PC-3 (cell line): ENCODE measurements at regions of chr18 and their contacts with region 1.

Region 1: DNA sequence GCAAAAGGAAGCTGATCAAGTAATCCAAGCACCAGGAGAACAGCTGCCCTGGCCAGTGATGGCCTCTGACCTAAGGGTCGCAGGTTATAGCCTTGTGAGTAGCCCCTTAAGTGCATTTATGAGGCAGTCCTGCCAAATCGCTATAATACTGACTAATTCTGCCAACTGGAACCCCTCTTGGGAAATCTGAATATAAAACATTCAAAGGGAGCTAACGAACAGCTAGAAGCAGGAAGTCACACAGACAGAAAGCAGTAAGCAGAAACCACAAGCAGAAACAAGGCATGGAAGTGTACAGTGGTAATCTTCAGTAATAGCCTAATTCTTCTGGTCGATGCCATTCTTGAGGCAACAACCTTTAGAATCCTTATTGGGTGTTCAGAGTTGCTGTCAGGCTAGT is 521.3 kb downstream of the METTL4 start:
- DNase-seq: no peak
- ATAC-seq: no peak
- H3K4me3 ChIP-seq: no peak overlapping the region
- H3K27ac ChIP-seq: no peak overlapping the region
- H3K4me1 ChIP-seq: peaks cover 10% of the 10 kb centered on the region; the same call in 1 of the 2 replicates
- H3K27me3 ChIP-seq: peaks cover 8% of the 10 kb centered on the region
- CTCF ChIP-seq: no peak

Region 2: DNA sequence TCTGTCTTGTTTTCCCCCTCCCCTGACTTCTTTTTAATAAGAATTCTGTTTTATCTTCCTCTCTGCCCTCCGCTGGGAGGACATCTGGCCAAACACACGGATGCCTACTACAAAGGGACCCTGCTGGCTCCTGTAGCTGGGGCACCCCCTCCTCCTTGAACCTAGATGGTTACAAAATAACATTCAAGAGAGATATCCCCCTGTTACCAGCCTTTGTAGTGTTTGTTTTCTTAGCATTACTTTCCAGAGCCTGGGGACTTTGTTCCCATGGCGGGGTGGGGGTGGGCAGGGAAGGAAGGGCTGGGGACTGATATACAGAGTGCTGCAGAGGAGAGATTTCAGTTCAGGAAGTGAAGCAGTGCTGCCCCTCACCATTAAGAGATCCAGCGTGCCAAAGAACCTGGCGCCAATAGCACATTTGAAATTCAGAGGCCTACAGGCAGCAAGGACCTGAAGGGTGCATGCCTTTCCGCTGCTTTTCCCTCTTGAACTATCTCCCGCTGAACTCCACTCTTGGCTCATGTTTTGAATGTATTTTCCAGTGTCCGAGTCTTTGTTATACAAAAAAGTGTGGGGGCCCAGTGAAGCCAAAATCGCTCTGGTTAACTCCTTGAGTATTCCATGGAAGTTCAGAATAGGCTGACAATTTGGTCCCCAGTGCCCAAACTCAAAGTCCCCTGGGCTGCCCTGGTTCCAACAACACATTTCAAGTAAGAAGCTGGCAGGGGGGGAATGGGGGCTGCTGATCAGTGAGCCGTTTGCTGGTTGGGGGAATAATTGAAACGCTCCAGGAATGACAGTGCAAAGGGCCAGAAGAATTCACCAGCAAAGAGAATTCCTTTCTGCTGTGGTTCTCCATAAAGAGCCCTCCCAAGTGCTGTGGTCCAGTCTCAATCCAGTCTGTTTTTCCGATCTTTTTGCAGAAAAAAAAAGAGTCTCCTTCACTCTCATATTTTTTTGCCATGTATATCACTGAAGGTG is 1687.4 kb before region 1 on chr18:
- CTCF ChIA-PET with region 1: no interaction called
- POLR2A ChIA-PET with region 1: interaction called, 13 read pairs
- intact Hi-C with region 1: no loop called
- DNase-seq: no peak
- ATAC-seq: no peak
- H3K4me3 ChIP-seq: no peak overlapping the region
- H3K27ac ChIP-seq: no peak overlapping the region
- H3K4me1 ChIP-seq: no peaks in the 10 kb centered on the region
- H3K27me3 ChIP-seq: peaks cover 79% of the 10 kb centered on the region
- CTCF ChIP-seq: no peak